ENCODE measurements at regions of chr6 and their contacts with region 1.

Region 1: GRCh38 chr6:163707401-163708355 is 293.2 kb downstream of the QKI start:
- DNase-seq: peak; percentile 65
- ATAC-seq: peak; percentile 53
- H3K4me3 ChIP-seq: no peak overlapping the region
- H3K4me3 Mint-ChIP-seq: peak overlapping the region; percentile 44
- H3K27ac ChIP-seq: no peak overlapping the region
- H3K27ac Mint-ChIP-seq: peak overlapping the region; percentile 73
- H3K4me1 ChIP-seq: peaks cover 98 to 99% of the 10 kb centered on the region in 2 donors
- H3K4me1 Mint-ChIP-seq: peaks cover 100% of the 10 kb centered on the region
- H3K27me3 ChIP-seq: no peaks in the 10 kb centered on the region
- H3K27me3 Mint-ChIP-seq: no peaks in the 10 kb centered on the region
- CTCF ChIP-seq: peak; percentile 47

Region 2: DNA sequence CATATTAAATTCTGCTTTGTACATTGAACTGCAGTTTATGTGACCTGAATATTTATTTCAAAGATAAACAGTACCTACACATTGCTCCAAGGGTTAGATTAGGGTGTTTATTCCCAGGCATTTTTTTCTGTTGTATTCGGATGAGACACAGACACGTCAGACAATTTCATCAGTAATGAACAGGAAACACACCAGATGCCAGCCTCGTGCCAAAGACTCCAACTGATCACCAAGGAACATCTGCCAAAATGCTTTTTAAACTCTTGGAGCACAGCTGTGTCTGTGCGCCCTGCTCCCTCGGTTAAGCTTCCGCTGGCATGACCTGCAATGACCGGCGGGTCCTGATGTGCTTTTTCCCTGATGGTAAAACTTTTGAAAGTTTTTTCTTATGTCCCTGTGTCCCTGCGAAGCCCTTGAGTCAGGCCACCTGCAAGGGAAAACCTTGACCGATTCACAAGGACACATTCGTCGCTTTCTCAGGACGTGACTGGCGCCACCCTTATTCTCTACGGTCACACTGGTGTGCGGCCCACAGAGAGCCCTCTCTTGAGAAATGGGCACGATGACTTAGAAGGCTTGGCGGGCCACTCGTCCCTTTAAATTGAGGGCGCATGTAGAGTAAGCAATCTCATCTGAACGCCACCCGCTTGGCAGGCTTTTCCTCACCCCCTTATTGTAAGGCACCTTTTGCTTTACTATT is 119.3 kb before region 1 on chr6:
- CTCF ChIA-PET with region 1: no interaction called
- POLR2A ChIA-PET with region 1: no interaction called
- intact Hi-C with region 1: no loop called
- DNase-seq: no peak
- ATAC-seq: no peak
- H3K4me3 ChIP-seq: no peak overlapping the region
- H3K4me3 Mint-ChIP-seq: no peak overlapping the region
- H3K27ac ChIP-seq: no peak overlapping the region
- H3K27ac Mint-ChIP-seq: no peak overlapping the region
- H3K4me1 ChIP-seq: no peaks in the 10 kb centered on the region
- H3K4me1 Mint-ChIP-seq: no peaks in the 10 kb centered on the region
- H3K27me3 ChIP-seq: peaks cover 0 to 8% (median 0%) of the 10 kb centered on the region in 4 experiments
- H3K27me3 Mint-ChIP-seq: peaks cover 8% of the 10 kb centered on the region
- CTCF ChIP-seq: no peak

Region 3: GRCh38 chr6:163667372-163668060 is 40.2 kb before region 1 on chr6:
- CTCF ChIA-PET with region 1: interaction called, 14 read pairs
- POLR2A ChIA-PET with region 1: interaction called, 10 read pairs
- intact Hi-C with region 1: loop called (anchors 1 kb)
- DNase-seq: peak; percentile 87
- ATAC-seq: peak; percentile 93
- H3K4me3 ChIP-seq: peak overlapping the region in 3 of 5 experiments; percentile 35 to 55 (median 37)
- H3K4me3 Mint-ChIP-seq: peak overlapping the region; percentile 73
- H3K27ac ChIP-seq: peak overlapping the region; percentile 49 to 61
- H3K27ac Mint-ChIP-seq: peak overlapping the region; percentile 94
- H3K4me1 ChIP-seq: peaks cover 38 to 57% of the 10 kb centered on the region in 2 donors
- H3K4me1 Mint-ChIP-seq: peaks cover 42% of the 10 kb centered on the region
- H3K27me3 ChIP-seq: no peaks in the 10 kb centered on the region
- H3K27me3 Mint-ChIP-seq: no peaks in the 10 kb centered on the region
- CTCF ChIP-seq: no peak

Region 4: DNA sequence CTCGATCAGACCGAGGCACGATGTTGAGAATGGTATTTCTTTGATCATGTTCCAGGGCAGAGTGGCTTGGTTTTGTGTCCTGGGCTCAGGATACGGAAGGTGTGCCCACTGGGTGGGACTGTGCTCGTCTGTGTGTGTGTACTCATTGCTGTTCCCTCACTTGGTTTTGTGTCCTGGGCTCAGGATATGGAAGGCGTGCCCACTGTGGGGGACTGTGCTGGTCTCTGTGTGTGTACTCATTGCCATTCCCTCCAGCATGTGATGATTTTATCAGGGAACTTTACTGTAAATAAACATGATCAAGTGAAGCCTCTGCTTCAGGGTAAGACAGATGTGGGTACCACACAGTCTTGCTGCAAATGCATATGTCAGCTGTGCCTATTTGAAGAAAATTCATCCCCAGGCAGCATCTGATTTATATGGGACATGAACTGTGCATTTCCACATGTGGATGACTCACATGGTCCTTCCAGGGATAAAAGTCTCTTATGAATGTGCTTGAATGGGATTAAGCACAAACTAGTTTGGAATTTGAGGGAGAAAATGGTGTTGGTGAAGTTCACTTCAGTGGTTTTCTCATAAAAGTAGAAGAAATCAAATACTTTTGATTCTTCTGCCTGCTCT is 18.8 kb before region 1 on chr6:
- CTCF ChIA-PET with region 1: interaction called, 6 read pairs
- POLR2A ChIA-PET with region 1: no interaction called
- intact Hi-C with region 1: loop called (anchors 2 kb)
- DNase-seq: no peak
- ATAC-seq: no peak
- H3K4me3 ChIP-seq: no peak overlapping the region
- H3K4me3 Mint-ChIP-seq: no peak overlapping the region
- H3K27ac ChIP-seq: no peak overlapping the region
- H3K27ac Mint-ChIP-seq: no peak overlapping the region
- H3K4me1 ChIP-seq: peaks cover 17 to 19% of the 10 kb centered on the region in 2 donors
- H3K4me1 Mint-ChIP-seq: peaks cover 25% of the 10 kb centered on the region
- H3K27me3 ChIP-seq: peaks cover 0 to under 1% (median 0%) of the 10 kb centered on the region in 4 experiments
- H3K27me3 Mint-ChIP-seq: peaks cover 1% of the 10 kb centered on the region
- CTCF ChIP-seq: no peak

Region 5: DNA sequence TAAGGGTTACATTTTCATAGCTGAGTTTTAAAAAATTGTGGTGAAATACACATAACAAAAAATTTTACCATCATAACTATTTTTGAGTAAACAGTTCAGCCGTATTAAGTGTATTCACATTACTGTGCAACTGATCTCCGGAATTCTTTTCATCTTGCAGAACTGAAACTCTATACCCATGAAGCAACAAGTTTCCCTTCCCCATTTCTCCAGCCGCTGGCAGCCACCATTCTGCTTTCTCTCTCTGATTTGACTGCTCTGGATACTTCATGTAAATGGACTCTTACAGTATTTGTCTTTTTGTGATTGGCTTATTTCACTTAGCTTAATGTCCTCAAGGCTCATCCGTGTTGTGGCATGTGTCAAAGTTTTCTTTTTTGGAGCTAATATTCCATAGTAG is 48.4 kb after region 1 on chr6:
- CTCF ChIA-PET with region 1: no interaction called
- POLR2A ChIA-PET with region 1: no interaction called
- intact Hi-C with region 1: loop called (anchors 1 kb)
- DNase-seq: peak; percentile 88
- ATAC-seq: peak; percentile 98
- H3K4me3 ChIP-seq: no peak overlapping the region
- H3K4me3 Mint-ChIP-seq: peak overlapping the region; percentile 61
- H3K27ac ChIP-seq: no peak overlapping the region
- H3K27ac Mint-ChIP-seq: peak overlapping the region; percentile 43
- H3K4me1 ChIP-seq: peaks cover 27 to 35% of the 10 kb centered on the region in 2 donors
- H3K4me1 Mint-ChIP-seq: peaks cover 39% of the 10 kb centered on the region
- H3K27me3 ChIP-seq: peaks cover 0 to 11% (median 3%) of the 10 kb centered on the region in 4 experiments
- H3K27me3 Mint-ChIP-seq: peaks cover 11% of the 10 kb centered on the region
- CTCF ChIP-seq: no peak